H1 (cell line): ENCODE measurements at regions of chr4 and their contacts with region 1.

Region 1: DNA sequence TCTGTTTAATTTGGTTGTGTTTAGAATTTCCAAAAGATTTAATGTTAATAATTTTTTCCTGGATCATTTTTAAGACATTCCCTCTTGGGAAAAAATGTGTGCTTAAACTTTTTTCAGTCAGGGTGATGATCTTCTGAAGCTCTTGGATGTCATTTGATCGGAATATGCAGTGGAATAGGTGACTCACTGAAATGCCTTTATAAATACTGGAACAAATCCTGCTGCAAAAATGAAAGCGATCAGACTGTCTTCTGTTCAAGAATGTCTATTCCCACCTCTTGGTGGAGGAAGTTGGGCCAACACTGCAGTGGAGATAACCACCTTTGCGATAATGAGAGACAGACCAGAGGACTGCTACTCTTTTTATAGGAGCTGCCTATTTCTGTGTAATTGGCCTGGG is 46.7 kb downstream of the LARP1B start:
- DNase-seq: no peak
- H3K4me3 ChIP-seq: no peak overlapping the region
- H3K27ac ChIP-seq: no peak overlapping the region
- H3K4me1 ChIP-seq: no peaks in the 10 kb centered on the region
- H3K27me3 ChIP-seq: no peaks in the 10 kb centered on the region
- CTCF ChIP-seq: no peak
- EP300 ChIP-seq: no peak
- POLR2A ChIP-seq: no peak
- RAD21 ChIP-seq: no peak

Region 2: GRCh38 chr4:127959794-127960193 is 148.0 kb before region 1 on chr4:
- CTCF ChIA-PET with region 1: no interaction called
- POLR2A ChIA-PET with region 1: no interaction called
- DNase-seq: no peak
- H3K4me3 ChIP-seq: no peak overlapping the region
- H3K27ac ChIP-seq: no peak overlapping the region
- H3K4me1 ChIP-seq: no peaks in the 10 kb centered on the region
- H3K27me3 ChIP-seq: no peaks in the 10 kb centered on the region
- CTCF ChIP-seq: no peak
- EP300 ChIP-seq: no peak
- POLR2A ChIP-seq: no peak
- RAD21 ChIP-seq: no peak

Region 3: DNA sequence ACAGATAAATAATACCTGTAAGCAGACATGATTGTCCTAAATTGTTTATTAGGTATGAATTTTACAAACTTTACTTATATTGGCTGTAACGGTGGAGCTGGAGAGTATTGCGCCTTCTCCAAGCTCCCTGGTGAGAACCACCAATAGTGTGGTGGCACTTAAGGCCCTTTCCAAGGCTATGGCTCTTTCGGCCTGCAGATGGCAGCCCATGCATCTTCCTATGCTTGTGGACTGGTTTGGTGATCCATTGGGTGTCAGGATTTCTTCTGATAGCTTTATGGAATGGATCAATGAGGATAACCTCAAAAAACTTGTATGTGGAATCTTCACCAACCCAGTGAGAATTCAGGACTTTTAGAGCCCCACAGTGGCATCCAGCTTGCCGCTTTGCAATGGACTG is 38.8 kb before region 1 on chr4:
- CTCF ChIA-PET with region 1: interaction called, 15 read pairs
- POLR2A ChIA-PET with region 1: no interaction called
- DNase-seq: peak in 1 of 2 experiments; percentile 47
- H3K4me3 ChIP-seq: no peak overlapping the region
- H3K27ac ChIP-seq: no peak overlapping the region
- H3K4me1 ChIP-seq: no peaks in the 10 kb centered on the region; a peak in 1 of 7 replicates
- H3K27me3 ChIP-seq: no peaks in the 10 kb centered on the region
- CTCF ChIP-seq: peak; percentile 51 to 69 (median 68)
- EP300 ChIP-seq: no peak
- POLR2A ChIP-seq: no peak
- RAD21 ChIP-seq: peak; percentile 44 to 53